H1 (cell line): ENCODE measurements at regions of chr6 and their contacts with region 1.

Region 1: GRCh38 chr6:116010790-116011401 is 49.8 kb downstream of the FRK start:
- DNase-seq: peak; percentile 17 to 74
- H3K4me3 ChIP-seq: no peak overlapping the region
- H3K27ac ChIP-seq: no peak overlapping the region
- H3K4me1 ChIP-seq: peaks cover 0 to 3% (median 0%) of the 10 kb centered on the region in 4 experiments; a peak in 1 of 7 replicates
- H3K27me3 ChIP-seq: no peaks in the 10 kb centered on the region
- CTCF ChIP-seq: peak; percentile 60 to 79 (median 72)
- EP300 ChIP-seq: no peak
- POLR2A ChIP-seq: no peak
- RAD21 ChIP-seq: peak; percentile 78 to 84

Region 2: GRCh38 chr6:115914098-115914497 is 96.8 kb before region 1 on chr6:
- CTCF ChIA-PET with region 1: no interaction called
- POLR2A ChIA-PET with region 1: no interaction called
- DNase-seq: no peak
- H3K4me3 ChIP-seq: no peak overlapping the region
- H3K27ac ChIP-seq: no peak overlapping the region
- H3K4me1 ChIP-seq: peaks cover 0 to 2% (median 0%) of the 10 kb centered on the region in 4 experiments; a peak in 1 of 7 replicates
- H3K27me3 ChIP-seq: no peaks in the 10 kb centered on the region
- CTCF ChIP-seq: no peak
- EP300 ChIP-seq: no peak
- POLR2A ChIP-seq: no peak
- RAD21 ChIP-seq: no peak

Region 3: GRCh38 chr6:116027801-116028200 is 16.9 kb after region 1 on chr6:
- CTCF ChIA-PET with region 1: interaction called, 11 read pairs
- POLR2A ChIA-PET with region 1: no interaction called
- DNase-seq: no peak
- H3K4me3 ChIP-seq: no peak overlapping the region
- H3K27ac ChIP-seq: no peak overlapping the region
- H3K4me1 ChIP-seq: no peaks in the 10 kb centered on the region
- H3K27me3 ChIP-seq: no peaks in the 10 kb centered on the region
- CTCF ChIP-seq: no peak
- EP300 ChIP-seq: no peak
- POLR2A ChIP-seq: no peak
- RAD21 ChIP-seq: no peak

Region 4: DNA sequence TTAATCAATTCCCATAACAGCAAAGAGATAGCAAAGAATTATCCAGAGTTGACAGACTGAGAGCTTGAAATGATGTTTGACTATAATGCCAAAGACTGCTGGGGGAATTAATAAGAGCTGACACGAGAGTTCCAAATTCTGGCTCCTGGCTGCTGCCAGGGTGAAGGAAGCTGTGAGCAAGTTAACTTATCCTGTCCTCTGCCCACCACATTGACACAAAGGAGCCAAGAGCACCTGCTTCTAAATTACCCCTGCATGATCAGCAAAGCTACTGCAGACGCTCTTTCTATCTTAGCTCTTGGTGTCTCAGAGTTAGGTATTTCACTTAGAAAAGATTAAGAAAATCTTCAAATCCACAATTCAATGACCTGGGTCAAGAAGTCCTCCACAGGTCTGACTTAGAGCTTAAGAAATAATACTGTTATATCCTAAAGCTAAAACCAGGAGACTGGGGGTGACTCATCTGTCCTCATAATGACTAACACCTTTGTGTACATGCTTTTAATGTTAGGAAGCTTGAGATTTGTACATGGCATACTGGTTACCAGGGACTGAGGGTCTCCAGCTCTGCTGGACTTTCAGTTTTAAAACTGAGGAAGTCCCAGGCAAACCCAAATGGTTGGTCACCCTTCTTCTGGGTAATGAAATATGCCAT is 63.0 kb after region 1 on chr6:
- CTCF ChIA-PET with region 1: interaction called, 11 read pairs
- POLR2A ChIA-PET with region 1: no interaction called
- DNase-seq: no peak
- H3K4me3 ChIP-seq: no peak overlapping the region
- H3K27ac ChIP-seq: no peak overlapping the region
- H3K4me1 ChIP-seq: no peaks in the 10 kb centered on the region
- H3K27me3 ChIP-seq: peaks cover 0 to 1% (median 0%) of the 10 kb centered on the region in 4 experiments; a peak in 1 of 7 replicates
- CTCF ChIP-seq: no peak
- EP300 ChIP-seq: no peak
- POLR2A ChIP-seq: no peak
- RAD21 ChIP-seq: no peak

Region 5: DNA sequence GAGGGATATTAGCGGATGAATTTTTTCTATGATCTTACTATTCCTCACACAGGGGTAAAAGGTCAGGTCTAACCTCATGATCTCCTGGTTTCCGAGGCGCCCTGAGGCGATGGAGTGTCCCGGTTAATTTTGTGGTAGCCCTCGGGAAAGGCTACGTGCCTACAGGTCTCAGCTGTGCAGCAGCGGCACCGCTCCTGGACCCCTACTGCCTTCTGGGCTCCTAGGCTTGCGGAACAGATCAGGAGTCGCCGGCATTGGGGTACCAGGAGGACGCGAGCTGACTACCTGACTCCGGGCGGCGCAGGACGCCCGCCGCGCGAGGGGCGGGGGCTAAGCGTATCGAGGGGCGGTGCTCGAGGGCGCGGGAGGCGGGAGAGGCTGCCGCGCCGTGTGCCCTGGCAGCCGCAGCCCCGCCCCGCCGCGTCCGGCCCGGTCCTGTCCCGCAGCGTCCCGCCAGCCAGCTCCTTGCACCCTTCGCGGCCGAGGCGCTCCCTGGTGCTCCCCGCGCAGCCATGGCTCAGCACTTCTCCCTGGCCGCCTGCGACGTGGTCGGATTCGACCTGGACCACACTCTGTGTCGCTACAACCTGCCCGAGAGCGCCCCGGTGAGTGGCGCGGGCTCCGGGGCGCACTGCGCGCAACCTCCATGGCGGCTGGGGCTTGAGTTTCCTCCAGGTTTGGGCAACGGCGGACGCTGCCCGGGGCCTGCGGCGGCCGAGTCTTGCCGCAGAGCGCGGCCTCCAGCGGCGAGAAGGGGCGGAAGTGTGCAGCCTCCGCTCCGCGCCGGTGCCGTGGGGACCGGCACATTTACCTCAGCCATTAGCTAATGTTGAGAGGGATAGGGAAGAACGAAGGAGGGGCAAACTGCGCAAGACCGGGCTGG is 89.8 kb after region 1 on chr6 and contains the start of gene NT5DC1:
- CTCF ChIA-PET with region 1: interaction called, 19 read pairs
- POLR2A ChIA-PET with region 1: interaction called, 3 read pairs
- DNase-seq: peak; percentile 71 to 92
- H3K4me3 ChIP-seq: peak within 1 kb of the TSS; percentile 78 to 97 (median 86)
- H3K27ac ChIP-seq: peak within 1 kb of the TSS; percentile 98
- H3K4me1 ChIP-seq: peaks cover 0 to 25% (median 11%) of the 10 kb centered on the region in 4 experiments; a peak in 6 of 7 replicates
- H3K27me3 ChIP-seq: no peaks in the 10 kb centered on the region
- CTCF ChIP-seq: peak in 2 of 3 experiments; percentile 21 to 36; a peak in 3 of 4 replicates
- EP300 ChIP-seq: 0 out of 3 replicates have a peak, but pooled peaks of 1 of the 2 experiments have one; percentile 3
- POLR2A ChIP-seq: peak; percentile 94 to 97
- RAD21 ChIP-seq: no peak; a peak in 1 of 4 replicates
- total RNA-seq, gene NT5DC1: 72.7 and 77.9 TPM in 2 replicates

Region 6: GRCh38 chr6:116111552-116112528 is 100.9 kb after region 1 on chr6:
- CTCF ChIA-PET with region 1: interaction called, 11 read pairs
- POLR2A ChIA-PET with region 1: no interaction called
- DNase-seq: peak in 1 of 2 experiments; percentile 62
- H3K4me3 ChIP-seq: no peak overlapping the region
- H3K27ac ChIP-seq: no peak overlapping the region
- H3K4me1 ChIP-seq: peaks cover 0 to 6% (median 3%) of the 10 kb centered on the region in 4 experiments; a peak in 3 of 7 replicates
- H3K27me3 ChIP-seq: no peaks in the 10 kb centered on the region
- CTCF ChIP-seq: peak; percentile 19 to 81 (median 64)
- EP300 ChIP-seq: no peak
- POLR2A ChIP-seq: no peak
- RAD21 ChIP-seq: peak; percentile 52 to 70

Region 7: GRCh38 chr6:116152620-116153019 is 141.7 kb after region 1 on chr6:
- CTCF ChIA-PET with region 1: no interaction called
- POLR2A ChIA-PET with region 1: no interaction called
- DNase-seq: no peak
- H3K4me3 ChIP-seq: no peak overlapping the region
- H3K27ac ChIP-seq: no peak overlapping the region
- H3K4me1 ChIP-seq: no peaks in the 10 kb centered on the region
- H3K27me3 ChIP-seq: no peaks in the 10 kb centered on the region
- CTCF ChIP-seq: no peak
- EP300 ChIP-seq: no peak
- POLR2A ChIP-seq: no peak
- RAD21 ChIP-seq: no peak